Heart left ventricle (tissue), 16 donors: ENCODE measurements at regions of chr17 and their contacts with region 1.

Region 1: DNA sequence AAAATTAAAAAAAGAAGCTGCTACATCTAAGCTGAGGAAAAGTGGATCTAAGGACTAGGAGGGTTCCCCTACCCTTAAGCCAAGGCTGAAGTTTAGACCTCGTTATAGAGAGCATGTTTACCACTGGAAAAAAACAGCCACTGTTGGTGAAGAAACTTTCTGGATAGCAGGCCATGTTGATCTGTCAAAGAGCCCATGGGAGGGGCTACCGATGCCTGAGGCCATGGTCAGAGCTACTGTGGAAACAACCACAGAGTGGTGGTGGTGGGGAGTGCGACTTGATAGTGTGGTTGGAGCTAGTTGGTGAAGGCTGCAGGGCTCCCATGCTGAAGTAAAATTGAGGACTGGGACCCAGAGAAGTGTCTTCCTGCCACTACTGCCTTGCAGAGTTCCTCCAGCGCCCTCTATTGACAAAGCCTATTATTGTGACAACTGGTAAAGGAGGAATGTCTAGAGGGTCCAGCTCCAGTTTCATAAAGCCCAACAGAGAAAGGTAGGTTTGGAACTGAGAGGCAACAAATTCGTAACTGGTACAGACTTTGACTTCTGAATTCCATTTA is 12.7 kb upstream of the FAM20A start:
- DNase-seq: peak in 2 of 5 donors; percentile 40 to 46
- ATAC-seq: peak; percentile 42 to 80 (median 71)
- H3K4me3 ChIP-seq: no peak overlapping the region
- H3K27ac ChIP-seq: no peak overlapping the region
- H3K4me1 ChIP-seq: peaks cover 0 to 5% (median 0%) of the 10 kb centered on the region in 12 donors
- H3K27me3 ChIP-seq: no peaks in the 10 kb centered on the region
- CTCF ChIP-seq: peak; percentile 46 to 75 (median 66)
- POLR2A ChIP-seq: no peak

Region 2: DNA sequence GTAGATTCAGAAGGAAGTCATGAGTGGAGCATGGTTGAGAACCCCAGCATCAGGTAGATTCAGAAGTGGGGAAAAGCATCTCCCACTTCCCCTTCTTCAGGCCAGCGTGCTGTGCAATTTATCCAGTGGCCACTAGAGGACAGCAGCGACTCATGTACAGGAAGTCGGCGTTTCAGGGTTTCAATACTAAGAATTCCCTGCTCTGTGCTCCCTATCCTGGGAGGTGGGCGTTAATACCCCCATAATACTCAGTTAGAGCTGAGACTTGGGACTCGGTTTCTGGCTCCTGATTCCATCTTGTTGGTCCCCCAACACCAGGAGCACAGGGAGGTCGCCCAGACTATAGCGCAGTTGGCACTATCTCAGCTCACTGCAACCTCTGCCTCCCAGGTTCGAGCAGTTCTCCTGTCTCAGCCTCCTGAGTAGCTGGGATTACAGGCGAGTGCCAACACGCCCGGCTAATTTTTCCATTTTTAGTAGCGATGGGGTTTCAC is 441.3 kb before region 1 on chr17:
- intact Hi-C with region 1: loop called in 1 of 10 experiments (anchors 10 kb)
- DNase-seq: peak; percentile 53 to 73 (median 62)
- ATAC-seq: peak; percentile 54 to 81 (median 77)
- H3K4me3 ChIP-seq: no peak overlapping the region
- H3K27ac ChIP-seq: no peak overlapping the region
- H3K4me1 ChIP-seq: peaks cover 0 to 4% (median 0%) of the 10 kb centered on the region in 12 donors
- H3K27me3 ChIP-seq: no peaks in the 10 kb centered on the region
- CTCF ChIP-seq: peak; percentile 91 to 99 (median 97)
- POLR2A ChIP-seq: no peak

Region 3: DNA sequence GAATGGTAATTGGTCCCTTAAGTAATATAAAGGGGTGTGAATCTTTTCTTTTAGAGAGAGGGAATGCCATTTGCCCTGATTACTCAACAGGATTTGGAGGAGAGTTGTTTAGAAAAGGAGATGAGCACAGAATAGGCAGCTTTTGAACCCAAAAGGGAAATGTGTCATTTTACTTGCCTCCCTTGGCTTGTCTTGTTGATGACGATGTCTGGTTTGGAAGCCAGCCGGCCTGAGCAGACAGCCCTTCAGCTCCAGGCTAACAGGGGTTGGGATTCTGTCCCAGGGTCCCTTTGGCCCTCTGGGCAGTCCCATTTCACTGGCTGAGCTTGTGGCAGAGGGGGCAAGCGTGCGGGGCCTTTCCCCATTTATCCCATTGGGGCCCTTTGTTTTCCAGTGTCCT is 123.9 kb before region 1 on chr17:
- intact Hi-C with region 1: no loop called
- DNase-seq: no peak
- ATAC-seq: peak in 1 of 4 donors; percentile 35
- H3K4me3 ChIP-seq: no peak overlapping the region
- H3K27ac ChIP-seq: peak overlapping the region in 2 of 12 donors; percentile 1 to 54
- H3K4me1 ChIP-seq: peaks cover 0 to 77% (median 25%) of the 10 kb centered on the region in 12 donors
- H3K27me3 ChIP-seq: no peaks in the 10 kb centered on the region
- CTCF ChIP-seq: no peak
- POLR2A ChIP-seq: no peak

Region 4: GRCh38 chr17:68539548-68540467 is 74.0 kb before region 1 on chr17:
- intact Hi-C with region 1: loop called in 4 of 10 experiments (anchors 5 to 10 kb)
- DNase-seq: no peak
- ATAC-seq: peak; percentile 5 to 27 (median 16)
- H3K4me3 ChIP-seq: no peak overlapping the region
- H3K27ac ChIP-seq: peak overlapping the region in 9 of 12 donors; percentile 6 to 60 (median 39)
- H3K4me1 ChIP-seq: peaks cover 0 to 27% (median 14%) of the 10 kb centered on the region in 12 donors
- H3K27me3 ChIP-seq: no peaks in the 10 kb centered on the region
- CTCF ChIP-seq: peak in 7 of 12 donors; percentile 11 to 39 (median 27)
- POLR2A ChIP-seq: no peak

Region 5: DNA sequence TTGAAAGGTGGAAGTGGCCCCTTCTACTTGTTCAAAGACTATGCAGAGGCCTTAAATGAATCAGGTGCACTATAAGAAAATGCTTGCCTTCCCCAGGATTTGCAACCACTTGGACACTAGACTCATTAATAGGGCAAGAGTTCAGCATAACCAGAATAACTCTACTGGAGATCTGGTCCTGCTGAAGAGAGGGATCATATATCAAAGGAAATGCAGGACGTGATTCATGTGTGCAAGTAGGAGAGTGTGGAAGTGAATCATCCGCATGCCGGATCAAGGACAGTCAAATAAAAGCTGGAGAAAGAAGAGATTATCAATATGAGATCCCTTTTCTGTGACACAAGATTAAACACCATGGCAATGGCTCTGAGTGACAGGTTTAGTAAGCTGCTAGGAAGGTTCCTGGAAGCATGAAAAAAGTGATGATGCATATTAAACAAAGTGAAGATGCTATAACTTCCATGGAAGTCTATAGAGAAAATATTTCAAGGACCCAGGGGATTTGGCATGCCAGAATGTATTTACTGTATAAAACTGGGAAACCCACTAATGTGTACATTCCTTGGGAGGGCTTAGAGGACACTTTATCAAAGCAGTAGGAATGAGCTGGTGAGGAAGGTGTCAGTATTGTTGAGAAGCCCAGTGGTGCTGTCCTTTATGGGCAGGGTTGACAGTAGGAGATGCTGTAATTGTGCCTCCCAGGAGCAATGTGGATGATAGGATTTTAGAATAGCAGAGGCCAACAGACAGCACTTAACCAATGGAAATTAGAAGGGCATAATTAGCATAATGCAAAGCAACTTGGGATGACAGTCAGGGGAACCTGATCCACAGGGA is 208.3 kb after region 1 on chr17:
- intact Hi-C with region 1: no loop called
- DNase-seq: no peak
- ATAC-seq: peak in 2 of 4 donors; percentile 55 to 73
- H3K4me3 ChIP-seq: no peak overlapping the region
- H3K27ac ChIP-seq: peak overlapping the region in 3 of 12 donors; percentile 21 to 64 (median 35)
- H3K4me1 ChIP-seq: peaks cover 0 to 20% (median 0%) of the 10 kb centered on the region in 12 donors
- H3K27me3 ChIP-seq: peaks cover 0 to under 1% (median 0%) of the 10 kb centered on the region in 9 donors
- CTCF ChIP-seq: no peak
- POLR2A ChIP-seq: no peak